Mammary epithelial cell (primary cell): ENCODE measurements at regions of chr14 and their contacts with region 1.

Region 1: DNA sequence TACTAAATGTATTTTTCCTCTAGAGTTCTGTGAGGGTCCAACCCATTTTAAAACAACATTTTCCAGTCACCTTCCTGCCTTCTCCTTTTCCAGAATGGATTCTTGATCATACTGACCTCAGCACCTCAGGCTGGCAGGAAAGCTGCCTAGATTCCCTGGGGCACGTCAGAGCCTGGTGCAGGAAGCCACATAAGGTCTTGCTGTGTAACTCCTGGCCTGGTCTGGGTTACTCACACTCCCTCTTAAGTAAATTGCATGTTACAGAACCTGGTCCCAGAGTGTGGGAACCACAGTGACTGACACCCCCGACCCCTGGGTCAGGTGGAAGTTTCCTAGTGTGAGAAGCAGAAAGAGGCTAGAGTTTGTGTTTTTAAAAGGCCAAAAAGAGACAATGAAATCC is 209.8 kb downstream of the SPTSSA start:
- DNase-seq: peak; percentile 71
- H3K4me3 ChIP-seq: no peak overlapping the region
- H3K27ac ChIP-seq: no peak overlapping the region
- H3K4me1 ChIP-seq: peaks cover 8% of the 10 kb centered on the region
- H3K27me3 ChIP-seq: no peaks in the 10 kb centered on the region
- CTCF ChIP-seq: no peak

Region 2: DNA sequence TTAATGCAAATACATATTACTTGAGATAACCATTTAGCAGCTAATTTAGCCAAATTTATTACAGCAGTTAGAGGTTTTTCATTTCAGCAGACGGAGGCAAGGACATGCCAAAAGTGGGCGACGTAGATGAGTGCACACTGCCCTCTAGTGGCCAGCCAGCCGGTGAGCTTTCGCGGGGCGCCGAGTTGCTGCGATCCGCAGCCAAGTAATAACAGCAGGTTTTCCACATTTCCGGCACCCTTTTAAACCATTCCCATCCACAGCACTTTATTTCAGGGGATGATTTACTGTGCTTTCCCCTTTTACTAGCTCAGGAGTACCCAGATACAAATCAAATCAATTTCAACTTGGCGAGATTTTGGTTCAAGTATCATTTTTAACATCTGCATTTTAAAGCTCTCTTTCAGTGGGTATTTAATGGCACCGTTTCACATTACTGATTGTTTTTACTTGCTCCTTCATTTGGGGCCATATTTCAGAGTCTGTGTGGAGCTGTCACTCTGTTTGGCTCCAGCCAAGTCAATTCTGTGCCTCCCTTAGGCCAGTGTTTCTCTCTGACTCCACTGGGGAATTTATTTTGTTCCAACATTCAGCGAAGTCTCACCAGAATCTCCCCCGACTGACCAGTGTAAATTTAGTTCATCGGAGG is 459.4 kb before region 1 on chr14:
- CTCF ChIA-PET with region 1: no interaction called
- dilution Hi-C with region 1: no loop called
- in situ Hi-C with region 1: no loop called
- intact Hi-C with region 1: no loop called
- DNase-seq: peak; percentile 48
- H3K4me3 ChIP-seq: no peak overlapping the region
- H3K27ac ChIP-seq: no peak overlapping the region
- H3K4me1 ChIP-seq: peaks cover 6% of the 10 kb centered on the region
- H3K27me3 ChIP-seq: no peaks in the 10 kb centered on the region
- CTCF ChIP-seq: peak; percentile 72 to 92

Region 3: DNA sequence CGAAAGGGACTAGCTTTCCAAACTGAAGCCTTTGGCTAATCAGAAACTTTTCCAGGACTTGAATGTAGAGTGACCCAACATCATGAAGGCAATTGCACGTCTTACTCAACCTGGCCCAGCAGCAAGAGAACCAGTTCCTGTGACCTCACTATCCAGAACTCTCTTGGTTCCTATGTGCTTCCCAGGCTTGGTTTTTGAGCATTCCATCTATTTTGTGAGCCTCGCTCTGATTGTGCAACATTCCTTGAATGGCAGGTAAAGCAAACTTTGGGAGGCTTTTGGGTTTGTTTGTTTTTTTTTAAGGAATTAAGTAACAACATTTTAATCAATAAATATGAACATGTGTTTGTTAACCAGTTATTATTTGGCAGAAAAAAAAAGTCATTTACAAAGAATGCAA is 117.7 kb before region 1 on chr14:
- CTCF ChIA-PET with region 1: interaction called, 16 read pairs
- dilution Hi-C with region 1: no loop called
- in situ Hi-C with region 1: no loop called
- intact Hi-C with region 1: no loop called
- DNase-seq: no peak
- H3K4me3 ChIP-seq: no peak overlapping the region
- H3K27ac ChIP-seq: no peak overlapping the region
- H3K4me1 ChIP-seq: peaks cover under 1% of the 10 kb centered on the region
- H3K27me3 ChIP-seq: no peaks in the 10 kb centered on the region
- CTCF ChIP-seq: no peak